ENCODE measurements at regions of chr4 and their contacts with region 1.

Region 1: DNA sequence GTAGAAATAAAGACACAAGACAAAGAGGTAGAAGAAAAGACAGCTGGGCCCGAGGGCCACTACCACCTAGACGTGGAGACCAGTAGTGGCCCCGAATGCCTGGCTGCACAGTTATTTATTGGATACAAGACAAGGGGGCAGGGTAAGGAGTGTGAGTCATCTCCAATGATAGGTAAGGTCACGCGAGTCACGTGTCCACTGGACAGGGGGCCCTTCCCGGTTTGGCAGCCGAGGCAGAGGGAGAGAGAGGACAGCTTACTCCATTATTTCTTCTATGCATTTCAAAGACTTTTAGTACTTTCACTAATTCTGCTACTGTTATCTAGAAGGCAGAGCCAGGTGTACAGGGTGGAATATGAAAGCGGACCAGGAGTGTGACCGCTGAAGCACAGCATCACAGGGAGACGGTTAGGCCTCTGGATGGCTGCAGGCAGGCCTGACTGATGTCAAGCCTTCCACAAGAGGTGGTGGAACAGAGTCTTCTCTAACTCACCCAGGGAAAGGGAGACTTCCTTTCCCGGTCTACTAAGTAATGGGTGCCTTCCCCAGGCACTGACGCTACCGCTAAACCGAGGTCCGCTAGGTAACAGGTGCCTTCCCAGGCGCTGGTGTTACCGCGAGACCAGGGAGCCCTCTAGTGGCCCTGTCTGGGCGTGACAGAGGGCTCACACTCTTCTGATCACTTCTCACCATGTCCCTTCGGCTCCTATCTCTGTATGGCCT is 44.9 kb downstream of the ZBTB49 start:
- DNase-seq: peak; percentile 19 to 56
- ATAC-seq: peak; percentile 56 to 91
- H3K4me3 ChIP-seq: no peak overlapping the region
- H3K27ac ChIP-seq: no peak overlapping the region
- H3K4me1 ChIP-seq: no peaks in the 10 kb centered on the region
- H3K27me3 ChIP-seq: no peaks in the 10 kb centered on the region
- CTCF ChIP-seq: peak; percentile 49 to 73 (median 64)
- POLR2A ChIP-seq: no peak

Region 2: GRCh38 chr4:4248029-4248884 is 86.7 kb before region 1 on chr4 and contains the start of gene TMEM128:
- in situ Hi-C with region 1: loop called (anchors 5 to 10 kb)
- intact Hi-C with region 1: loop called (anchors 1 kb)
- DNase-seq: peak; percentile 83 to 87
- ATAC-seq: peak; percentile 98 to 99
- H3K4me3 ChIP-seq: peak within 1 kb of the TSS; percentile 79 to 88 (median 82)
- H3K27ac ChIP-seq: peak within 1 kb of the TSS; percentile 84 to 92 (median 88)
- H3K4me1 ChIP-seq: peaks cover 21 to 26% of the 10 kb centered on the region in 2 donors
- H3K27me3 ChIP-seq: no peaks in the 10 kb centered on the region
- CTCF ChIP-seq: peak in 4 of 5 experiments; percentile 22 to 31 (median 28)
- POLR2A ChIP-seq: peak; percentile 58 to 63
- total RNA-seq, gene TMEM128: 3.7 to 8.6 (median 4.6) TPM

Region 3: DNA sequence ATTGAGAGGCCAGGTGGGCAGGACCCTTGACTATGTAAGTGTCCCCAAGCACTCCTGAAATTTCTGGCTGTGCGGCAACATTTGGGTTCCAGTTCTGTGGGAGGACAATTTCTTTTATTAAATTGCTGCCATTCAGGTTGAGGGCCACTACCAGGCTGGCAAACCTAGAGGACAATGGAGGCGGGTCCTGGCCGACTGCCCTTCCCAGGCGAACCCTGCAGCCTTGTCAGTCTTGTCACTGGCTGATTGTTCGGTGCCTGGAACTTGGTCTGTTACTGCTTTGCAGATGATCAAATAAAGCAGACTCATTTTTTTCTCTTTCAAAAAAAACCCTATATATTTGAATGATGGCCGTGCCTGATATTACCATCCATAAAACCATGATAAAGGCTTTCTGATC is 80.3 kb before region 1 on chr4:
- in situ Hi-C with region 1: loop called (anchors 5 to 10 kb)
- intact Hi-C with region 1: loop called (anchors 1 kb)
- DNase-seq: no peak
- ATAC-seq: no peak
- H3K4me3 ChIP-seq: no peak overlapping the region
- H3K27ac ChIP-seq: no peak overlapping the region
- H3K4me1 ChIP-seq: no peaks in the 10 kb centered on the region
- H3K27me3 ChIP-seq: no peaks in the 10 kb centered on the region
- CTCF ChIP-seq: no peak
- POLR2A ChIP-seq: no peak

Region 4: DNA sequence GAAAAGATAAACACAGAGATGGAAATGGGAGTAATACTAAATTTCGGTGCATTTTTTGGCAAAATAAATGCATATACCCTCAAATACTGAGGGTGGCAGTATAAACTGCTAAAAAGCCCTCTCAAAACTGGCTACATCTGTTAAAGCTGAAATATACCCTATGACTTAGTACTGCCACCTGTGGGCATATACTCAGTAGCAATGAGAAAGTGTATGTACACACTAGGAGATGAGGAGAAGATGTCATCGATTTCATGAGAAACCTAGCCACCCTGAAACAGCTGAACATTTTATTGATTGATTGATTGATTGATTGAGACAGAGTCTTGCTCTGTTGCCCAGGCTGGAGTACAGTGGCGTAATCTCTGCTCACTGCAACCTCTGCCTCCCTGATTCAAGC is 74.7 kb before region 1 on chr4:
- in situ Hi-C with region 1: loop called in 2 of 4 experiments (anchors 10 kb)
- intact Hi-C with region 1: no loop called
- DNase-seq: no peak
- ATAC-seq: peak in 1 of 2 donors; percentile 39
- H3K4me3 ChIP-seq: no peak overlapping the region
- H3K27ac ChIP-seq: no peak overlapping the region
- H3K4me1 ChIP-seq: no peaks in the 10 kb centered on the region
- H3K27me3 ChIP-seq: no peaks in the 10 kb centered on the region
- CTCF ChIP-seq: peak in 2 of 5 experiments; percentile 10 to 19
- POLR2A ChIP-seq: no peak